ENCODE measurements at regions of chr5 and their contacts with region 1.

Region 1: GRCh38 chr5:56457887-56458812 is 225.0 kb upstream of the ANKRD55 start:
- DNase-seq: peak; percentile 89
- H3K4me3 ChIP-seq: no peak overlapping the region
- H3K27me3 ChIP-seq: no peaks in the 10 kb centered on the region
- CTCF ChIP-seq: no peak

Region 2: DNA sequence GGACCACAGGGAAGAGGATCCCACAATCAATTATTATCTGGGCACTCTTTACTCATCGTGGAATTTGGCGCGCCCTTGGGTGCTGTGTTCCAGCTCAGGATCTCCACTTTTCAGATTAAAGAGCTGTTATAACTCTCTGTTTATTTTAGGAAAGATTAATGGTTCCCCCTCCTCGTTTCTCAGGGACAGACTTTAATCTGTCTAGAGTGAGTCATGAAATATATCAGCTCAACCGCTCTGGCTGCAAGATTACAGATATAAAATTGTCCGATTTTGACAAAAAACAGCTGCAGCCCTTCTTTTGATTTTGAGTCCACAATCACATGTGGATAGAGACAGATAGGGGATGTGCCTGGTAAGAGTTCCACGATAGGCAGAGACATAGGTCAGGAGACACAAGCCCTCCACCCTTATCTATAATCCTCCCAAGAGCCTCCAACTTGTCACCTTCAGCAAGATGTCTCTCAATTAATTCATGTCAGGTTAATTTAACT is 147.4 kb before region 1 on chr5:
- CTCF ChIA-PET with region 1: no interaction called
- POLR2A ChIA-PET with region 1: no interaction called
- DNase-seq: no peak
- H3K4me3 ChIP-seq: no peak overlapping the region
- H3K27me3 ChIP-seq: no peaks in the 10 kb centered on the region
- CTCF ChIP-seq: no peak

Region 3: GRCh38 chr5:56471707-56472106 is 13.6 kb after region 1 on chr5:
- CTCF ChIA-PET with region 1: interaction called, 10 read pairs
- POLR2A ChIA-PET with region 1: no interaction called
- DNase-seq: no peak
- H3K4me3 ChIP-seq: no peak overlapping the region
- H3K27me3 ChIP-seq: no peaks in the 10 kb centered on the region
- CTCF ChIP-seq: no peak

Region 4: GRCh38 chr5:57054671-57055070 is 596.5 kb after region 1 on chr5:
- CTCF ChIA-PET with region 1: no interaction called
- POLR2A ChIA-PET with region 1: no interaction called
- DNase-seq: no peak
- H3K4me3 ChIP-seq: no peak overlapping the region
- H3K27me3 ChIP-seq: peaks cover 2% of the 10 kb centered on the region; the same call in 1 of the 2 replicates
- CTCF ChIP-seq: no peak